Endothelial cell of umbilical vein (primary cell): ENCODE measurements at regions of chr1 and their contacts with region 1.

Region 1: DNA sequence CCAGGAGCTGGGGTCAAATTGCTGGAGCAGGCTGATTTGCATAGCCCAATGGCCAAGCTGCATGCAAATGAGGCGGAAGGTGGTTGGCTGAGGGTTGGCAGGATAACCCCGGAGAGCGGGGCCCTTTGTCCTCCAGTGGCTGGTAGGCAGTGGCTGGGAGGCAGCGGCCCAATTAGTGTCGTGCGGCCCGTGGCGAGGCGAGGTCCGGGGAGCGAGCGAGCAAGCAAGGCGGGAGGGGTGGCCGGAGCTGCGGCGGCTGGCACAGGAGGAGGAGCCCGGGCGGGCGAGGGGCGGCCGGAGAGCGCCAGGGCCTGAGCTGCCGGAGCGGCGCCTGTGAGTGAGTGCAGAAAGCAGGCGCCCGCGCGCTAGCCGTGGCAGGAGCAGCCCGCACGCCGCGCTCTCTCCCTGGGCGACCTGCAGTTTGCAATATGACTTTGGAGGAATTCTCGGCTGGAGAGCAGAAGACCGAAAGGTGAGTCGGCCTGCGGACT is at the start of gene GADD45A:
- DNase-seq: peak; percentile 99
- H3K4me3 ChIP-seq: peak within 1 kb of the TSS; percentile 77 to 85 (median 83)
- H3K27ac ChIP-seq: peak within 1 kb of the TSS; percentile 90
- H3K4me1 ChIP-seq: peaks cover 43% of the 10 kb centered on the region
- H3K27me3 ChIP-seq: no peaks in the 10 kb centered on the region
- CTCF ChIP-seq: no peak
- POLR2A ChIP-seq: peak; percentile 100
- total RNA-seq, gene GADD45A: 77.4 and 91.6 TPM in 2 replicates

Region 2: DNA sequence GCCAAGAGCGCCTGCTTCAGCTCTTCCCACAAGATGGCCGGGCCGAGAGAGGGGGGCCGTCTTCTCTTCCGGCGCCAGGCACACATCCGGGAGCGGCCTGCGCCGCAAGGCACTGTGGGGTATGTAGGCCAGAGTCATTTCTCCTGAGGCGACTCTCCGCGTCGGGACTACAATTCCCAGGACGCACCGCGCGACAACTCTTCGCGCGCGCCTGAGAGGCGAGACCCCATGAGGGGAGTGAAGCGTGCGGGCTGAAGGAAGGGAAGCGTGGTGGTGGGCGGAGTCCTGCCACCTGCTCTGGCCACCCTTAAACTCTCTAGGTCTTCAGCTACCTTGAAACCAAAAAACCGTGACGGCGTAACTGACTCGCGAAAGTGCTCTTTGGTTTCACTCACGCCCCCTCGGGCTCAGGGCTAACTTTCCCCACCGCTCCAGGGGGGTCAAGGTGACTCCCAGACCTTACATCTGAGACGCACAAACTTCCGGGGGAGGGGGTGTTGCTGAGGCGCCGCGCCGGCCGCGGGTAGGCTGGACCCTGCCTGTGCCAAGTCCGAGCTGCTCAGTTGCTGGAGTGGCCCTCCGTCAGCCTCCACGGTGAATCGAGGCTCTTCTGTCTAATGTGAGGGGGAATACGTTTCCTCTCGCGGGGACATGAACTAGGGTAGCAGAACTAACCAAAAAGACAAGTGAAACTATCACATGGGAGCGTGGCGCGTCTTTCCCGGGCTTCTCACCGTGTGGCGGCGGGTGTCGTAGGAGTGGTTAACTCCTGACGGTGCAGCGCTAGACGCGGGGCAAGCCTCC is 254.6 kb before region 1 on chr1 and contains the start of gene SERBP1:
- CTCF ChIA-PET with region 1: no interaction called
- POLR2A ChIA-PET with region 1: no interaction called
- dilution Hi-C with region 1: no loop called
- intact Hi-C with region 1: loop called (anchors 1 kb)
- DNase-seq: peak; percentile 99
- H3K4me3 ChIP-seq: peak within 1 kb of the TSS; percentile 92 to 99 (median 93)
- H3K27ac ChIP-seq: peak within 1 kb of the TSS; percentile 75
- H3K4me1 ChIP-seq: peaks cover 27% of the 10 kb centered on the region
- H3K27me3 ChIP-seq: no peaks in the 10 kb centered on the region
- CTCF ChIP-seq: no peak
- POLR2A ChIP-seq: peak; percentile 16
- total RNA-seq, gene SERBP1: 290 and 293 TPM in 2 replicates

Region 3: GRCh38 chr1:67570473-67571143 is 114.5 kb before region 1 on chr1:
- CTCF ChIA-PET with region 1: interaction called, 8 read pairs
- POLR2A ChIA-PET with region 1: interaction called, 10 read pairs
- dilution Hi-C with region 1: no loop called
- intact Hi-C with region 1: no loop called
- DNase-seq: peak; percentile 50
- H3K4me3 ChIP-seq: no peak overlapping the region
- H3K27ac ChIP-seq: no peak overlapping the region
- H3K4me1 ChIP-seq: peaks cover 5% of the 10 kb centered on the region
- H3K27me3 ChIP-seq: no peaks in the 10 kb centered on the region
- CTCF ChIP-seq: no peak
- POLR2A ChIP-seq: no peak

Region 4: GRCh38 chr1:67626495-67627235 is 58.4 kb before region 1 on chr1:
- CTCF ChIA-PET with region 1: interaction called, 7 read pairs
- POLR2A ChIA-PET with region 1: interaction called, 9 read pairs
- dilution Hi-C with region 1: no loop called
- intact Hi-C with region 1: loop called (anchors 1 kb)
- DNase-seq: peak; percentile 99
- H3K4me3 ChIP-seq: no peak overlapping the region
- H3K27ac ChIP-seq: peak overlapping the region; percentile 98
- H3K4me1 ChIP-seq: peaks cover 56% of the 10 kb centered on the region
- H3K27me3 ChIP-seq: no peaks in the 10 kb centered on the region
- CTCF ChIP-seq: no peak
- POLR2A ChIP-seq: peak; percentile 14

Region 5: GRCh38 chr1:67713057-67713846 is 28.1 kb after region 1 on chr1:
- CTCF ChIA-PET with region 1: interaction called, 5 read pairs
- POLR2A ChIA-PET with region 1: interaction called, 4 read pairs
- dilution Hi-C with region 1: no loop called
- intact Hi-C with region 1: loop called (anchors 1 kb)
- DNase-seq: peak; percentile 92
- H3K4me3 ChIP-seq: no peak overlapping the region
- H3K27ac ChIP-seq: peak overlapping the region; percentile 64
- H3K4me1 ChIP-seq: peaks cover 45% of the 10 kb centered on the region
- H3K27me3 ChIP-seq: no peaks in the 10 kb centered on the region
- CTCF ChIP-seq: no peak
- POLR2A ChIP-seq: no peak

Region 6: DNA sequence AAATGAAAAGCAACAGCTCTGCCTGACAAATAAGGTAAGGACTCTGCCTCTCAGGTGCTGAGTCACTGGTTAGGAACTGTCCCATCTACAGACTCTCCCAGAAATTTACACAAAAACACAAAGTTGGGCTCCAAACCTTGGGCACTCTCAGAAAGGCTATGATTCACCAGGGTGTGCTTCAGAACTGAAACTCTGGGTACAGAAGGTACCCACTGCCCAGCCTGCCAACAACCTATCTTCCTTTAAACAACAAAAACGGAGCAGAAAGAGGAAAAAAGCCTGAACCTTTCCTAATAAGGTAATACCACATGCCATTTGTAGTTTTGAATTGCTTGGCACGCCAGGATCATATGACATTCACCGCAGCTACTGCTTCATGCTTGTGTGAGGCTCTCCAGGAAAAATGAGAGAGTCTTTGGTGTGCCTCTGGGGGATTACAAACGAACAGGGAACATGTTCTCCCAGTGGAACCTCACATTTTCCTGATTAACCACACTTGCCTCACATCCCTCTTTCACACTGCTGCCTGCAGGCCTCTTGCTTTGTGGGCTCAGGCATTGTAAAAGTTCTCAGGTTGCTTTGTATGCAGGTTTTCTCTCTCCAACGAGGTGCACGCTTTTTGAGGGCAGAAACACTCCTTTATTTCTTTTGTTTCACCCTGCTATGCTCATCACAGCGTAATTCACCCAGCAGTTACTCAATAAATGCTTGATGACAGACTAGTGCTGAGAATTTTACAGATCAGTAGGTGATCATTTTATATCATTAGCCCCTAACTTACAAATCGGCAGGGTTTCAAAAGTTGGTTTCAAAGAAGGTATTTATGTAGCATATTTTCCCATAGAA is 65.0 kb after region 1 on chr1:
- CTCF ChIA-PET with region 1: interaction called, 5 read pairs
- POLR2A ChIA-PET with region 1: interaction called, 6 read pairs
- dilution Hi-C with region 1: no loop called
- intact Hi-C with region 1: loop called (anchors 1 kb)
- DNase-seq: peak; percentile 76
- H3K4me3 ChIP-seq: no peak overlapping the region
- H3K27ac ChIP-seq: peak overlapping the region; percentile 55
- H3K4me1 ChIP-seq: peaks cover 67% of the 10 kb centered on the region
- H3K27me3 ChIP-seq: no peaks in the 10 kb centered on the region
- CTCF ChIP-seq: no peak
- POLR2A ChIP-seq: no peak

Region 7: DNA sequence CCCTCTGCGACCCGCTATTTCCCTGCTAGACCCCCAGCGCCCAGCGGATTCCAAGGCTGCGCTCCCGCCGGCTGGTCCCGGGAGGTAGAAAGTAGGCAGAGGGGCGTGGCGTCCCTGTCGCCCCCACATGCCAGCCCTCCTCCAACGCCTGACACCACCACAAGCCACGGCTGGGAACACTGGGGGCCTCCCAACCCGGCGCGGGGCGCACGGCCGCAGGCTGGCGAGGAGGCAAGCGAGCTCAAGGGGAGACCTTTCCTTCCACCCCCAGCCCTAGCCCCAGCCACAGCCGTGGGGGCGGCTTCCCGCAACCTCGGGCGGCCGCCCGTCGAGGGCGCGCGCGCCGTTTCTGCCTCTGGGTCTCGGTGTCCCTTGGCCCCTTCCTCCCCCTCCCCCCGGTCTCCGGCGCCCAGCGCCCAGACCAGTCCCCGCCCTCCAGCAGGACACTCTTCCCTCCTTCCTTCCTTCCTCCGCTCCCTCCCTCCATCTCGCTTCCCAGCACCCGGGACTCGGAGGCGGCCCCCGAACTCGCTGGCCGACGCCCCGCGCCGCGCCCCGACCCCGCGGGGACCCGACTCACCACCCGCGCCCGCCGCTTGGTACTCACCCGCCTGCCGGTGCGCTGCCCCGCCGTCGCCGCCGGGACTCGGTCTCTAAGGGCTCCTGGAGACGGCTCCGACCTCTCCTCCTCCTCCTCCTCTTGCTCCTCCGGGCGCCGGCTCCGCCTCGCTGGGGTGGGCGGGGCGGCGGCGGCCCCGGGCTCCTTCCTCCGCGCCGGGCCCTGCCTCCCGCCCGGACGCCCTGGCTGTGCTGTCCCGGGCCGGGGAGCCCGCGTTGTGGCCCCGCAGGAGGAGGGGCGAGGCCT is 147.9 kb after region 1 on chr1 and contains the start of gene GNG12:
- CTCF ChIA-PET with region 1: no interaction called
- POLR2A ChIA-PET with region 1: interaction called, 3 read pairs
- dilution Hi-C with region 1: no loop called
- intact Hi-C with region 1: loop called (anchors 2 kb)
- DNase-seq: peak; percentile 83
- H3K4me3 ChIP-seq: peak within 1 kb of the TSS; percentile 55 to 86 (median 55)
- H3K27ac ChIP-seq: peak within 1 kb of the TSS; percentile 90
- H3K4me1 ChIP-seq: peaks cover 29% of the 10 kb centered on the region
- H3K27me3 ChIP-seq: no peaks in the 10 kb centered on the region
- CTCF ChIP-seq: no peak
- POLR2A ChIP-seq: peak; percentile 85
- total RNA-seq, gene GNG12: 145 and 152 TPM in 2 replicates

Region 8: GRCh38 chr1:68010090-68010489 is 325.0 kb after region 1 on chr1:
- CTCF ChIA-PET with region 1: no interaction called
- POLR2A ChIA-PET with region 1: no interaction called
- dilution Hi-C with region 1: no loop called
- intact Hi-C with region 1: no loop called
- DNase-seq: peak; percentile 49
- H3K4me3 ChIP-seq: no peak overlapping the region
- H3K27ac ChIP-seq: no peak overlapping the region
- H3K4me1 ChIP-seq: peaks cover 12% of the 10 kb centered on the region
- H3K27me3 ChIP-seq: no peaks in the 10 kb centered on the region
- CTCF ChIP-seq: peak; percentile 10 to 30
- POLR2A ChIP-seq: no peak